Stomach (tissue), 19 donors: ENCODE measurements at regions of chr7 and their contacts with region 1.

Region 1: GRCh38 chr7:50528266-50529092 is 36.7 kb downstream of the DDC start:
- DNase-seq: peak in 1 of 2 donors; percentile 68
- H3K4me3 ChIP-seq: no peak overlapping the region
- H3K27ac ChIP-seq: no peak overlapping the region
- H3K4me1 ChIP-seq: peaks cover 10 to 13% (median 12%) of the 10 kb centered on the region in 4 donors
- H3K27me3 ChIP-seq: no peaks in the 10 kb centered on the region
- CTCF ChIP-seq: no peak
- EP300 ChIP-seq: no peak
- POLR2A ChIP-seq: no peak

Region 2: DNA sequence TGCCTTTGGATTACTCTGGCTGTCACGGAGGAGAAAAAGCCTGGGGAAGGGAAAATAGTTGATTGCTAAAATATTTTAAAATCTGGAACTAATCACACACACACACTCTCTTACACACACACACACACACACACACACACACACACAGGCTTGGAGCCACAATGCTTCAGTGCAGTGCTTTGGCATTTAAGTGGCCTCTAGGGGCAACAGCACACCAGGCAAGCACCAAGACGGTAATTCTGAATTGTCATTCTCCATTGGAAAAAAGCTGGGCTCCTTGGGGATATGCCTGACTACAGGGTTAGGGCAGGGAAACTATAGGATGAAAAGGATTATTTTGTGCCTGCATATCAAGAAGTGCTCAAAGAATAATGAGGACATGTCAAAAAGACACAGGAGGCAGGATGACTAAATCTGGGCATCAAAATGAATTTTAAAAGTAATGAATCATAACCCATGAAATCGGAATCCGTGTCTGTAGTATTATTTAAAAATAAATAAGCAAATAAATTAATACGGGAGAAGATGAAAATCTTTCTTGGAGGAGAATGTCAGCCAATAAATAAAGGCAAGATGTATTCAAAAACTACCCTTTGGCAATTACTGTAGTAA is 67.1 kb after region 1 on chr7:
- intact Hi-C with region 1: loop called (anchors 10 kb)
- DNase-seq: peak in 1 of 2 donors; percentile 64
- H3K4me3 ChIP-seq: no peak overlapping the region
- H3K27ac ChIP-seq: no peak overlapping the region
- H3K4me1 ChIP-seq: peaks cover 0 to 2% (median 0%) of the 10 kb centered on the region in 4 donors
- H3K27me3 ChIP-seq: no peaks in the 10 kb centered on the region
- CTCF ChIP-seq: peak in 4 of 7 experiments; percentile 29 to 33 (median 31)
- EP300 ChIP-seq: no peak
- POLR2A ChIP-seq: no peak